ENCODE measurements at regions of chr1 and their contacts with region 1.

Region 1: DNA sequence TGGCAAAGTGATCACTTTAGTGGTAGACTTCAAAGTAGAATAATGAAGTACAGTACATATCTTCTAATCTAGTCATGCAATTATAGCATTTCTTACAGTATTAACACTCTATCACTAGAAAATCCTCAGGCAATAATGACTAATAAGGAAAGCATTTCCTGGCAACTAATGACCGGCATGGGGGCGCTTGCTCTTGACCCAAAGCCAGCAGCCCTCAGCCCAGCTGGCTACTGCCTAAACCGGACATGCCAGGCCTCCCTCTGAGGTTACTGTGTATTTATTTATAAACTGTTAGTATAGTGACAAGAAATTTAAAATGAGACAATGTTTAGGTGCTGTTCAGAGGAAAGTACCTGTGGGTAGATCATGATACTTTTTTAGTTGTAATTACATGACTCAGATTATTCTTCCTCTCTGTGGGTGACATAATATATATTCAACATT is 633.8 kb downstream of the PTPRC start:
- DNase-seq: peak; percentile 97
- H3K4me3 ChIP-seq: no peak overlapping the region
- H3K27ac ChIP-seq: peak overlapping the region; percentile 97
- H3K4me1 ChIP-seq: peaks cover 25% of the 10 kb centered on the region
- H3K27me3 ChIP-seq: no peaks in the 10 kb centered on the region
- CTCF ChIP-seq: no peak
- POLR2A ChIP-seq: peak; percentile 49

Region 2: GRCh38 chr1:198443374-198444233 is 829.1 kb before region 1 on chr1:
- CTCF ChIA-PET with region 1: no interaction called
- POLR2A ChIA-PET with region 1: no interaction called
- dilution Hi-C with region 1: no loop called
- intact Hi-C with region 1: loop called (anchors 10 kb)
- DNase-seq: peak; percentile 92
- H3K4me3 ChIP-seq: no peak overlapping the region
- H3K27ac ChIP-seq: peak overlapping the region; percentile 76
- H3K4me1 ChIP-seq: peaks cover 37% of the 10 kb centered on the region
- H3K27me3 ChIP-seq: no peaks in the 10 kb centered on the region
- CTCF ChIP-seq: no peak
- POLR2A ChIP-seq: peak; percentile 25

Region 3: DNA sequence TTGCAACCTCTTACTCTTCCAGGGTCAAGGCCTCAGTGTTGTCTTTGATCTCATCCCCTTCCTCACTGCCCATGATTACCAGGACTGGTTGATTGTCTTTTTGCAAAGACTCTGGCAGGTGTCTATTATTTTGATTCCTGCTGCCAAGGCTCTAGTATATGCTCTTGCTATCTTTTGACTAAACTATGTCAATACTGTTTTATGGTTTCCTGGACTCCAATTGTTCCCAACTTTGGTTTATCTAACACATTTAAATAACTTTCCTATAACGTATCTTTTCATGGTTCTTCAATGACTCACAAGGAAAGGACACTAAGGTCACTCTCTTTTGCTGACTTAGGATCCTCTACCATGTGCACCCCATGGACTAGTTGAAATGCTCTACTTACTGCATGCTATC is 492.3 kb before region 1 on chr1:
- CTCF ChIA-PET with region 1: no interaction called
- POLR2A ChIA-PET with region 1: no interaction called
- dilution Hi-C with region 1: no loop called
- intact Hi-C with region 1: loop called (anchors 1 kb)
- DNase-seq: peak; percentile 91
- H3K4me3 ChIP-seq: no peak overlapping the region
- H3K27ac ChIP-seq: peak overlapping the region; percentile 84
- H3K4me1 ChIP-seq: peaks cover 56% of the 10 kb centered on the region
- H3K27me3 ChIP-seq: no peaks in the 10 kb centered on the region
- CTCF ChIP-seq: no peak
- POLR2A ChIP-seq: no peak

Region 4: DNA sequence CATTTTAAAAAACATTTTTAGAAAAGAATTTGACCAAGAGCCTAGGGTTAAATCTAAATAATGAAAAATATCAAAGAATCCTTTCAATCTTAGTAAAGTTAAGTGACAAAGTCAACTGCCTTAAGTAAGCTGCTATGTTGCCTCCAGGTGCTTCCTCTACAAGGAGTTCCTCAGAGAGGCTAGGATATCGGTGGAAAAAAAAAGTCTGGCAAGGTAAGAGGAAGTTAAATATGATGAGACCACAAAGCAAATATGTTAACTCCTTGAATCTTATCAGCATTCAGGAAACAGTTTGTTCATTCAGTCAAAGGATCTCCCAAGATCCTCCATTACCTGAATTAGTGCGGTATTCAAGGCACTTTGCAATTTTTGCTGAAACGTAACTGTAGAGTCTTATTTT is 70.3 kb before region 1 on chr1:
- CTCF ChIA-PET with region 1: no interaction called
- POLR2A ChIA-PET with region 1: no interaction called
- dilution Hi-C with region 1: no loop called
- intact Hi-C with region 1: loop called (anchors 2 kb)
- DNase-seq: peak; percentile 59
- H3K4me3 ChIP-seq: no peak overlapping the region
- H3K27ac ChIP-seq: no peak overlapping the region
- H3K4me1 ChIP-seq: peaks cover 5% of the 10 kb centered on the region
- H3K27me3 ChIP-seq: no peaks in the 10 kb centered on the region
- CTCF ChIP-seq: no peak
- POLR2A ChIP-seq: no peak

Region 5: DNA sequence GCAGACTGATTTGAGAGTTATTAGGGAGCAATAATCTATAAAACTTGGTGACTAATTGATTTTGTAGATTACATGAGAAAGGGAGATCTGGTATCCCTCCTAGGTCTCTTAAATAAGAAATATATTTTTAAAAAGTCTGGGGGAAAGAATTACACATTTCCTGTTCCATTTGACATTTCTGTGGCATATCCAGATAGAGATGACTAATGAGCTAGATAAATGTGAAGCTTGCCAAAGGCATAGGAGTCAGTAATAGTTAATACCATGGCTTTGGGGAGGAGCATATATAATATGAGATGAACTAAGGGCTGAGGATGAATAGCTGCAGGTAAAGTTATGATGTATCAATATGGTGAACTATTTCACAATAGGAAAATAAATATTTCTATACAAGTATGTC is 29.9 kb after region 1 on chr1:
- CTCF ChIA-PET with region 1: interaction called, 3 read pairs
- POLR2A ChIA-PET with region 1: no interaction called
- dilution Hi-C with region 1: no loop called
- intact Hi-C with region 1: loop called (anchors 1 kb)
- DNase-seq: peak; percentile 85
- H3K4me3 ChIP-seq: no peak overlapping the region
- H3K27ac ChIP-seq: peak overlapping the region; percentile 61
- H3K4me1 ChIP-seq: peaks cover 37% of the 10 kb centered on the region
- H3K27me3 ChIP-seq: no peaks in the 10 kb centered on the region
- CTCF ChIP-seq: no peak
- POLR2A ChIP-seq: no peak

Measured in endothelial cell of umbilical vein (primary cell).